Naive thymus-derived CD4-positive, alpha-beta T cell (primary cell): ENCODE measurements at regions of chr2 and their contacts with region 1.

Region 1: DNA sequence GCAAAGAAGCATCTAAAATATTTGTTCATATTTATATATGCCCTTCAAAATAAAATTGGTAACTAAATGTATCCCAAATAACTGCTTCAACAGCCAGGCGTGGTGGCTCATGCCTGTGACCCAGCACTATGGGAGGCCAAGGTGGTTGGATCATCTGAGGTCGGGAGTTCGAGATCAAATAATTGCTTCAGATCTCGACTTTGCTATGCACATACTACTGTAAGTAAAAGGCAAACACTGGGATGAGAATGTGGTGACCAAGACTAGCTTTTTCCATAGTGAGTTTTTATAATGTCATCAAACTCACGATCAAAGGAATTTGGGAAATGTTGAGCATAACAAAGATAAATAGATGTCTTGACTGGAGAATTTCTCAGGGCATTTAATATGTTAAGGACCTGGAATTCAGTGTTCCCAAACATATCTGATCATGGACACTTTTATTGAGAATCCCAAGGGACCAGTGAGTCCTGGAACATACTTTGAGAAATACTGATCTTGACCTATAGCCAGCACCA is 205.6 kb downstream of the ARHGAP15 start:
- DNase-seq: no peak
- ATAC-seq: no peak
- H3K4me3 ChIP-seq: no peak overlapping the region
- H3K4me3 Mint-ChIP-seq: no peak overlapping the region
- H3K27ac ChIP-seq: no peak overlapping the region
- H3K27ac Mint-ChIP-seq: no peak overlapping the region
- H3K4me1 ChIP-seq: peaks cover 9 to 14% of the 10 kb centered on the region in 2 donors
- H3K4me1 Mint-ChIP-seq: peaks cover 22 to 87% (median 76%) of the 10 kb centered on the region in 7 donors
- H3K27me3 ChIP-seq: no peaks in the 10 kb centered on the region
- H3K27me3 Mint-ChIP-seq: no peaks in the 10 kb centered on the region

Region 2: DNA sequence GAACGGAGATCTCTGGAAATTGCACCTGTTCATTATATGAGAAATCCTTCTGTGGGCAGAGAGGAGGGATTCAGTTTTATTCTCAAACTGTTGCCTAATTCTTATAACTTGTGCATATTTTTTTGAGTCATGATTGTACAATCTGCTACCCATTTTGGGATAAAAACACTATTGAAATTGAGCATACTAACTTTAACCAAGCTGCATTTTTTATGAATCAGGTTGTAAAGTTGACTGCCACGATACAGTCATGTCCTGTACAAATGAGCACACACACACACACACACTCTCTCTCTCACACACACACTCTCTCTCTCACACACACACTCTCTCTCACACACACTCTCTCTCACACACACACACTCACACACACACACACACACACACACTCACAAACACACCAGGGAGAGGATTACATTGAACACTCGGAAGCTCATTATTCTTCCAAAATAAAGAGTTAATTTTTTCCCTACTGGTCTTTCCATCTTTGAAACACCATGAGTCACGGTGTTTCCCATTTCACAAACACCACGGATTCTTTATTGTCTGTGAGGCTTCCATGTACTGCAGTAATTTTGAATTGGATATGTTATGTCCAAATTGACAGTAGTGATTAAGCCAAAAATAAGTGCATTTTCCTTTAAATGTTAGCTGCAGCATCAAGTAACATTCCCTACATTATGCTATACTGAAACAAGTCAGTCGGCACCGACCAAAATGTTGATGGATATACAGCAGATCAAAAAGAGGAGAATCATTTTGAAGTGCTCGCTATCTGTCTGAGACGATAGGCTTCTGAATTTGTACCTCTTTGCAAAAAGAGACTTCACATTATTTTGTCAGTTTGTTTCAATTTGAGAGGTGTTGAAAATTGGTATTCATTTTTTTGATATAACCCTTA is 11.4 kb after region 1 on chr2:
- CTCF ChIA-PET with region 1: no interaction called
- POLR2A ChIA-PET with region 1: interaction called, 3 read pairs
- intact Hi-C with region 1: loop called in 1 of 2 experiments (anchors 2 kb)
- DNase-seq: no peak
- ATAC-seq: no peak
- H3K4me3 ChIP-seq: no peak overlapping the region
- H3K4me3 Mint-ChIP-seq: peak overlapping the region in 1 of 10 donors; percentile 18
- H3K27ac ChIP-seq: no peak overlapping the region
- H3K27ac Mint-ChIP-seq: peak overlapping the region in 3 of 9 donors; percentile 3 to 46 (median 25)
- H3K4me1 ChIP-seq: no peaks in the 10 kb centered on the region
- H3K4me1 Mint-ChIP-seq: peaks cover 4 to 65% (median 43%) of the 10 kb centered on the region in 7 donors
- H3K27me3 ChIP-seq: no peaks in the 10 kb centered on the region
- H3K27me3 Mint-ChIP-seq: no peaks in the 10 kb centered on the region